Calu3 (cell line): ENCODE measurements at regions of chr7 and their contacts with region 1.

Region 1: GRCh38 chr7:106358103-106358663 is 73.4 kb upstream of the NAMPT start:
- DNase-seq: peak; percentile 43
- H3K4me3 Mint-ChIP-seq: no peak overlapping the region
- H3K27ac Mint-ChIP-seq: peak overlapping the region; percentile 96
- H3K4me1 Mint-ChIP-seq: peaks cover 34% of the 10 kb centered on the region
- H3K27me3 Mint-ChIP-seq: no peaks in the 10 kb centered on the region
- CTCF ChIP-seq: no peak

Region 2: GRCh38 chr7:106313456-106313901 is 44.7 kb before region 1 on chr7:
- CTCF ChIA-PET with region 1: no interaction called
- intact Hi-C with region 1: no loop called
- DNase-seq: peak; percentile 23
- H3K4me3 Mint-ChIP-seq: peak overlapping the region; percentile 7
- H3K27ac Mint-ChIP-seq: peak overlapping the region; percentile 93
- H3K4me1 Mint-ChIP-seq: peaks cover 22% of the 10 kb centered on the region
- H3K27me3 Mint-ChIP-seq: no peaks in the 10 kb centered on the region
- CTCF ChIP-seq: no peak

Region 3: GRCh38 chr7:106326594-106327537 is 31.3 kb before region 1 on chr7:
- CTCF ChIA-PET with region 1: no interaction called
- intact Hi-C with region 1: no loop called
- DNase-seq: no peak
- H3K4me3 Mint-ChIP-seq: no peak overlapping the region
- H3K27ac Mint-ChIP-seq: no peak overlapping the region
- H3K4me1 Mint-ChIP-seq: peaks cover 44% of the 10 kb centered on the region
- H3K27me3 Mint-ChIP-seq: no peaks in the 10 kb centered on the region
- CTCF ChIP-seq: no peak

Region 4: DNA sequence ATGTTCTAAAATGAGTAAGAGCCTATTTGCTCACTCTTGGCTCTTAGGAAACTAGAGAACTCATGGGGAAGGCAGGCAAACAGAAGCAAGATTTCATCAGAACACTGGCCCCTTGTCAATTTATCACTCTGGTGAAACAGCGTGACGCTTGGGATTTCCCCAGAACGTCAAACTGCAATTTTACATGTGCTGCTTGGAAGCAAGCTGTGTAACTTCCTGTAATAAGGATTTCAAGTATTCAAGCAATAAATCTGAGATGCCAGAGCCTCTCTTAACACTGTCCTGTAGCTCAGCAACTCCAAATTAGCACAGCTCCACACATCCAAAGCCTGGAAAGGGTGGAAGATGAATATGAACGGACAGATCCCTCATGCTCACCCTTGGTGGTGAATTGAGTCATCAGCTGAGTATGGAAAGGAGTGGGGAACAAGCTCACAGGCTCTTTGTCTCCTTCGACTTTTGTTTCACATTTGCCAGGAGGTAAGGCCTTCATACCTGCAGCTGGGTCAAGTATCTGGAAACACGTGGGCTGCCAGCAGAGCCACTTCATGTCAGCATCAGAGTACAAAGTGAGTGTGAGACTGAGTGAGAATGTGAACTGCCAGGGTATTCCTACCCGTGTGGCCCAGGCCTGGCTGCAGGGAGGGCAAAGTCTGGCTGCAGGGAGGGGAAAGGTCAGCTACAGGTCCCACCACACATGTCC is 67.0 kb after region 1 on chr7:
- CTCF ChIA-PET with region 1: interaction called, 3 read pairs
- intact Hi-C with region 1: loop called (anchors 1 kb)
- DNase-seq: peak; percentile 79
- H3K4me3 Mint-ChIP-seq: peak overlapping the region; percentile 21
- H3K27ac Mint-ChIP-seq: peak overlapping the region; percentile 94
- H3K4me1 Mint-ChIP-seq: peaks cover 83% of the 10 kb centered on the region
- H3K27me3 Mint-ChIP-seq: no peaks in the 10 kb centered on the region
- CTCF ChIP-seq: no peak